H1 (cell line): ENCODE measurements at regions of chr2 and their contacts with region 1.

Region 1: DNA sequence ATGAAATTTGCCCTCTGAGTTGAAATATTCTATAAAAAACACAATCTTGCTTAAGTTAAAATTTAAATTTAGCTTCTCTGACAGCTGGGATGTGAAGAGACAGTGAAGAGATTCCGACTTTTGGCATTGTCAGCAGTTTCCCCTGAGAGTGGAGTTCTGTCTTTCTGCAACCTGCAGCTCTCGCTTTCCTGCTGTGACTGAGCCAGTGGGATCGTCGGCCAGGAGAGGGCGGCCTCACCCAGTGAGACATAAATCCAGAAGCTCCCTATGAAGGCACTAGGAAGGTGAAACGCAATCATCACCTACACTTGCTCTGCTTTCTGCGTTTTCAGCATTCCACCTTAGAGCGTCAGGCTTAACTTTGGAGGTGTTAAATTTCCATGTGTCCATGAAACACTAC is 75.4 kb upstream of the HNMT start:
- DNase-seq: peak; percentile 13 to 62
- H3K4me3 ChIP-seq: no peak overlapping the region
- H3K27ac ChIP-seq: no peak overlapping the region
- H3K4me1 ChIP-seq: peaks cover 0 to 3% (median 1%) of the 10 kb centered on the region in 4 experiments; a peak in 2 of 7 replicates
- H3K27me3 ChIP-seq: no peaks in the 10 kb centered on the region
- CTCF ChIP-seq: peak; percentile 60 to 79 (median 65)
- EP300 ChIP-seq: no peak
- POLR2A ChIP-seq: no peak
- RAD21 ChIP-seq: peak; percentile 75 to 76

Region 2: DNA sequence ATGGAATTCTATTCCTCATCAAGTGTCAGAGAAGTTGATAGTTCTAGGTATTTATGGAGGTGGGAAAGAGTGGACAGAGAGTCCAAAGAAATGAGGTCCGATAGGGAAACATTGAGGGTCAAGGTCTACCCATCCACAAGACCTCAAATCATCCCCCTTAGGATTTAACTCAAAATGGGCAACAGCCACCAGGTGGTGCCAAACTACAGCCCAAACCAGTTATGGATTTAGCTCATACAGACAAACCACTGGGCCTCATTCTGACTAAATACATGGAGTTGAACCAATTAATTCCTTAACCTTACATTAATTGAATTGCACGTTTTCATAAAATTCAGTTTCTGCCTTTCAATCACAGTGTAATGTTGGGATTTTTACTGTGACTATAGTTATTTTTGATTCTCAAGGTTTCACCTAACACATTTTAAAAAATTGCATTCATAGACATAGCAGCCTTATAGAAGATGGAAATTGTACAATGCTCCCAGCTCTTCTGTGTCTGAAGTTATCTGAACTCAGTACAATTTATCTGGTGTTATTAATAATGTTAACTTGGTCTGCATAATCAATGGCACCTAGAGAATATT is 22.8 kb before region 1 on chr2:
- CTCF ChIA-PET with region 1: interaction called, 52 read pairs
- POLR2A ChIA-PET with region 1: no interaction called
- DNase-seq: peak in 1 of 2 experiments; percentile 76
- H3K4me3 ChIP-seq: no peak overlapping the region
- H3K27ac ChIP-seq: no peak overlapping the region
- H3K4me1 ChIP-seq: peaks cover 0 to 3% (median 0%) of the 10 kb centered on the region in 4 experiments; a peak in 2 of 7 replicates
- H3K27me3 ChIP-seq: no peaks in the 10 kb centered on the region
- CTCF ChIP-seq: peak; percentile 40 to 79 (median 78)
- EP300 ChIP-seq: no peak
- POLR2A ChIP-seq: no peak
- RAD21 ChIP-seq: peak; percentile 91 to 93

Region 3: GRCh38 chr2:137873521-137874406 is 15.1 kb before region 1 on chr2:
- CTCF ChIA-PET with region 1: interaction called, 43 read pairs
- POLR2A ChIA-PET with region 1: interaction called, 3 read pairs
- DNase-seq: no peak
- H3K4me3 ChIP-seq: no peak overlapping the region
- H3K27ac ChIP-seq: no peak overlapping the region
- H3K4me1 ChIP-seq: no peaks in the 10 kb centered on the region
- H3K27me3 ChIP-seq: no peaks in the 10 kb centered on the region
- CTCF ChIP-seq: no peak
- EP300 ChIP-seq: no peak
- POLR2A ChIP-seq: no peak
- RAD21 ChIP-seq: no peak

Region 4: DNA sequence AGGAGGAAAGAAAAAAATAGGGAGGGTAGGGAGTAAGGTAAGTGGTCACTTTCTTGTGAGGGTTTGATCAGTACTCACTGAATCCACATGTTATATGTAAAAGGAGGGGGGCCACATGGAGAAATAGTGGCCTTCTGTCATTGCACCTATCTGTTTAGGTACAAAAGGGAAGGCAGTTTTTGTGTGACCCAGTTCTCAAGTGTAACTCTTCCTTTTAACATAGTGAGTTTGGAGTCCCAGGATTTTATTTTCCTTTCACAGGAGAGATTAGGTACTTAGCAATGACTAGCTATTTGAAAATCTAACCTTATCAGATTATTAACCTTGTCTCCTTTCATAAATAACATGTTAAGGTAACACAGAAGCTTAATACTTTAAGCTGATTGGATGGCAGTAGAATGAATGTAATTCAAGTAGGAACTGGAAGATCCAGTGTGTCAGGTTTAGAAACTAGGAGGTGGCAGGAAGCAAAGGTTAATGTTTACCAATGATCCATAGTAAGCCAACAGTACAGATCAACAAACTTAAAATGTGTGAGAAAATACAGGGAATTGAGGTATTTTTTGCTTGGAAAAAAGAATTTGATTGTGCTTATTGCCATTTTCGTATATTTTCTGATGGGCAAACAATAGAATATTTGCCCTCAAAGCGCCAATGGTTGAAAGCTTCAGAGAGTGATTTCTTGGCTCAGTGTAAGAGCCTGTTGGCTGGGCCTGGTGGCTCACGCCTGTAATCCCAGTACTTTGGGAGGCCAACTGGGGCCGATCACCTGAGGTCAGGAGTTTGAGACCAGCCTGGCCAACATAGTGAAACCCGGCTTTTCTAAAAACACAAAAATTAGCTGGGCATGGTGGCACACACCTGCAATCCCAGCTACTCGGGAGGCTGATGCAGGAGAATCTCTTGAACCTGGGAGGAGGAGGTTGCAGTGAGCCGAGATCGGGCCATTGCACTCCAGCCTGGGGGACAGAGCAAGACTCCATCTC is 86.7 kb after region 1 on chr2:
- CTCF ChIA-PET with region 1: no interaction called
- POLR2A ChIA-PET with region 1: no interaction called
- DNase-seq: no peak
- H3K4me3 ChIP-seq: no peak overlapping the region
- H3K27ac ChIP-seq: no peak overlapping the region
- H3K4me1 ChIP-seq: peaks cover 0 to 4% (median 0%) of the 10 kb centered on the region in 4 experiments; a peak in 1 of 7 replicates
- H3K27me3 ChIP-seq: no peaks in the 10 kb centered on the region
- CTCF ChIP-seq: no peak
- EP300 ChIP-seq: no peak
- POLR2A ChIP-seq: no peak
- RAD21 ChIP-seq: no peak

Region 5: DNA sequence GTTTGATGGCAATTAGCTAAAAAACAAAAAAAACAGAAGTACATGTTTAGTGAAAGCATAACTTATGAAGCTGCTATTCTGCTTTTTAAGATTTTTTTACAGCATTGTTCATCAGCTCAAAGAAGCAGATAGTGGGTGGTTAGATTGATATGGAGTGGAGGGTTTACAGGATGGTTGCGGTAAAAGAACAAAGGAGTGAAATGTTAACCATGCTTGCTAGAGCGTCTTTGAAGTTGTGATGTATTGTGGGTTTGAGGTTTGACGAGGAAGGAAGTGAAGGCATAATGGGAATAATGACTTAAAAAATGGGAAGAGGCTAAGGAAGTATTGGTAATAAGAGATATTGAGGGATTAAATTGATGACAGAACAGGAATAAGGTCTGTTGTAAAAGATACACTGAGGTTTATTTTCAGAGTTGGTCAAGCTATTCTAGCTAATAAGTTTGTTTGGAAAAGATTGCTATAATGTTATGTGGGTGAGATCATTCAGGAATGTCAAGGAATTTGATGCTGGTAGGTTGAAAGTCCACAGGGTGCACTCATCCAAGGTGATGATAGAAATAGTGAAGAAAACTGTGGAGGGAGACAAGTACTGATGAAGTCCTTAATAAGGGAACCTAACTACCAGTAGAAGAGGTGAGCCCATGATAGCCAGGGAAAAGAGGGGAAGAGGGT is 627.3 kb after region 1 on chr2:
- CTCF ChIA-PET with region 1: no interaction called
- POLR2A ChIA-PET with region 1: no interaction called
- DNase-seq: no peak
- H3K4me3 ChIP-seq: no peak overlapping the region
- H3K27ac ChIP-seq: no peak overlapping the region
- H3K4me1 ChIP-seq: peaks cover 4 to 9% (median 4%) of the 10 kb centered on the region in 4 experiments; a peak in 5 of 7 replicates
- H3K27me3 ChIP-seq: no peaks in the 10 kb centered on the region
- CTCF ChIP-seq: no peak
- EP300 ChIP-seq: no peak
- POLR2A ChIP-seq: no peak
- RAD21 ChIP-seq: no peak